Activated naive CD8-positive, alpha-beta T cell treated with anti-CD3 and anti-CD28 coated beads, Interleukin-2, amount 10 ng/mL, durations not matched to agents 7 days and 5 days (primary cell): ENCODE measurements at regions of chr16 and their contacts with region 1.

Region 1: GRCh38 chr16:88700636-88701482 is 5.3 kb downstream of the RNF166 start:
- DNase-seq: peak; percentile 92
- ATAC-seq: peak; percentile 68
- H3K4me3 Mint-ChIP-seq: peak overlapping the region; percentile 96
- H3K27ac Mint-ChIP-seq: peak overlapping the region; percentile 98
- H3K4me1 Mint-ChIP-seq: peaks cover 31% of the 10 kb centered on the region
- H3K27me3 Mint-ChIP-seq: no peaks in the 10 kb centered on the region

Region 2: DNA sequence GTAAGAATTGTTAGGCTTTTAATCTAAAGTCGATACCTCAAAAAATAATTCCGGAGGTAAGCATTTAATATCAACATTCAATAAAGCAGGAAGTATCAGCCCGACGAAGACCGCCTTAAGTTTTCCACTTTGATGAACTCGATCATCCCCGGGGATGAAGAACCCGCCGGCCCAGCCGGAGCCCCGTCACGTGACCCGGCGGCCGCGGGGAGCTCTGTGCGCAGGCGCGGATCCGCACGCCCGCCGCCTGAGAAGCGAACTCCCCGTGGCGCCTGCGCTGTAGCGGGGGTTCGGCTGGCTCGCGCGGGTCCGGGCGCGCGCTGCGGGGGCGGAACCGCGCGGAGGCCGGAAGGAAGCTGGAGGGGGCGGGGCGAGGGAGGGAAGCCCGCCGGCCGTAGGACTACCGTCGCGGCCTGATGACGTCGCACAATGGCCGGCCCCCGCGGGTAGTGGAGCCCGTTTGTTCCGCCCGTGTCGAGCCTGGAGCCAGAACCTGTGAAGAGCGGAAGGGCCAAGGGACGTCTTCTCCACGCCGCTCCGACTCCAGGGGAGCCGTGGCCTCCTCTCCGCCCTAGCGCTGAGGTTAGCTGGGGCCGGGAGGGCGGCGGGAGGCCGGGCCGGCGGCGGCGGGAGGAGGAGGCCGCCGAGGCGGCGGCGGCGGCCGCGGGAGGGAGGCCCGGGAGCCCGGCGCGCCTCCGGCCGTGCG is 130.7 kb before region 1 on chr16 and contains the start of gene ZC3H18:
- POLR2A ChIA-PET with region 1: interaction called, 19 read pairs
- DNase-seq: peak; percentile 99
- ATAC-seq: peak; percentile 93
- H3K4me3 Mint-ChIP-seq: peak within 1 kb of the TSS; percentile 89
- H3K27ac Mint-ChIP-seq: peak within 1 kb of the TSS; percentile 87
- H3K4me1 Mint-ChIP-seq: peaks cover 24% of the 10 kb centered on the region
- H3K27me3 Mint-ChIP-seq: no peaks in the 10 kb centered on the region
- total RNA-seq, gene ZC3H18: 83.4 to 88.7 TPM

Region 3: GRCh38 chr16:88610080-88610479 is 90.8 kb before region 1 on chr16:
- POLR2A ChIA-PET with region 1: no interaction called
- DNase-seq: no peak
- ATAC-seq: no peak
- H3K4me3 Mint-ChIP-seq: no peak overlapping the region
- H3K27ac Mint-ChIP-seq: no peak overlapping the region
- H3K4me1 Mint-ChIP-seq: peaks cover 4% of the 10 kb centered on the region
- H3K27me3 Mint-ChIP-seq: no peaks in the 10 kb centered on the region

Region 4: DNA sequence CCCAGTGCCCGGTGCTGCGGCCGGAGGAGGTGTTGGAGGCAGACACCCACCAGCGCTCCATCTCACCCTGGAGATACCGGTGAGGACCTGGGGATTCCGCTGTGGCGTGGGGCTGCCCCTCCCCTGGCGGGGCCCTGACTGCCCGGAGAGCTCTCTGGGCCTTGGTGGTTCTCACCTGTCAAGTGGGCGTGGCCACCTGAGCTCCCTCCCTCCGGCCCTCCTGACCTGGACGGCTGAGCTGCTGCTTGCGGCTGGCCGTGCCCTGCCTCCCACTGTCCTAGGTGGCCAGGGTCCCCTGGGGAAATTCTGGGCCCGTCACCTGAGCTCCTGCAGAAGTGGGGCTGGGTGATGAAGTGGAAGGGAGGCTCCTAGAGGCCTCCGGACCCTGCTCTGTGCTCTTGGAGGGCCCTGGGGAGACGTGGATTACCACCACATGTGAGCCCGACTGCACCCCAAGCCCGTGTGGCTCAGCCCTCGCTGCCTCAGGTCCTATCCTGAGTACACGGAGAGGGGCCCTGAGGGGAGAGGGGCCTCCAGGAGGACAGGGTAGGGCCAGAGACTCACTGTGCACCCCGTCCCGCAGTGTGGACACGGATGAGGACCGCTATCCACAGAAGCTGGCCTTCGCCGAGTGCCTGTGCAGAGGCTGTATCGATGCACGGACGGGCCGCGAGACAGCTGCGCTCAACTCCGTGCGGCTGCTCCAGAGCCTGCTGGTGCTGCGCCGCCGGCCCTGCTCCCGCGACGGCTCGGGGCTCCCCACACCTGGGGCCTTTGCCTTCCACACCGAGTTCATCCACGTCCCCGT is 61.4 kb before region 1 on chr16:
- POLR2A ChIA-PET with region 1: interaction called, 25 read pairs
- DNase-seq: no peak
- ATAC-seq: no peak
- H3K4me3 Mint-ChIP-seq: no peak overlapping the region
- H3K27ac Mint-ChIP-seq: no peak overlapping the region
- H3K4me1 Mint-ChIP-seq: peaks cover 20% of the 10 kb centered on the region
- H3K27me3 Mint-ChIP-seq: peaks cover 33% of the 10 kb centered on the region

Region 5: GRCh38 chr16:88650749-88651275 is 50.0 kb before region 1 on chr16 and contains the start of gene CYBA:
- POLR2A ChIA-PET with region 1: interaction called, 25 read pairs
- DNase-seq: peak; percentile 94
- ATAC-seq: peak; percentile 87
- H3K4me3 Mint-ChIP-seq: peak within 1 kb of the TSS; percentile 91
- H3K27ac Mint-ChIP-seq: peak within 1 kb of the TSS; percentile 96
- H3K4me1 Mint-ChIP-seq: peaks cover 9% of the 10 kb centered on the region
- H3K27me3 Mint-ChIP-seq: no peaks in the 10 kb centered on the region
- total RNA-seq, gene CYBA: 505 to 513 TPM

Region 6: GRCh38 chr16:88662843-88663606 is 37.8 kb before region 1 on chr16 and contains the start of gene MVD:
- POLR2A ChIA-PET with region 1: interaction called, 32 read pairs
- DNase-seq: peak; percentile 94
- ATAC-seq: peak; percentile 99
- H3K4me3 Mint-ChIP-seq: peak within 1 kb of the TSS; percentile 97
- H3K27ac Mint-ChIP-seq: peak within 1 kb of the TSS; percentile 94
- H3K4me1 Mint-ChIP-seq: peaks cover 16% of the 10 kb centered on the region
- H3K27me3 Mint-ChIP-seq: no peaks in the 10 kb centered on the region
- total RNA-seq, gene MVD: 80.7 to 84.2 TPM

Region 7: GRCh38 chr16:88686439-88687253 is 14.2 kb before region 1 on chr16 and contains the start of gene SNAI3:
- POLR2A ChIA-PET with region 1: interaction called, 66 read pairs
- DNase-seq: peak; percentile 95
- ATAC-seq: peak; percentile 79
- H3K4me3 Mint-ChIP-seq: peak within 1 kb of the TSS; percentile 86
- H3K27ac Mint-ChIP-seq: peak within 1 kb of the TSS; percentile 73
- H3K4me1 Mint-ChIP-seq: peaks cover 32% of the 10 kb centered on the region
- H3K27me3 Mint-ChIP-seq: peaks cover 1% of the 10 kb centered on the region
- total RNA-seq, gene SNAI3: 14.4 to 15.0 TPM

Region 8: GRCh38 chr16:88811769-88812512 is 111.1 kb after region 1 on chr16 and contains the start of gene APRT:
- POLR2A ChIA-PET with region 1: interaction called, 40 read pairs
- DNase-seq: peak; percentile 100
- ATAC-seq: peak; percentile 71
- H3K4me3 Mint-ChIP-seq: peak within 1 kb of the TSS; percentile 96
- H3K27ac Mint-ChIP-seq: peak within 1 kb of the TSS; percentile 99
- H3K4me1 Mint-ChIP-seq: peaks cover 14% of the 10 kb centered on the region
- H3K27me3 Mint-ChIP-seq: no peaks in the 10 kb centered on the region
- total RNA-seq, gene APRT: 124 to 139 TPM